ENCODE measurements at regions of chr2 and their contacts with region 1.

Region 1: GRCh38 chr2:80238692-80239469 is 65.7 kb downstream of the LRRTM1 start:
- DNase-seq: no peak
- CTCF ChIP-seq: peak; percentile 30

Region 2: DNA sequence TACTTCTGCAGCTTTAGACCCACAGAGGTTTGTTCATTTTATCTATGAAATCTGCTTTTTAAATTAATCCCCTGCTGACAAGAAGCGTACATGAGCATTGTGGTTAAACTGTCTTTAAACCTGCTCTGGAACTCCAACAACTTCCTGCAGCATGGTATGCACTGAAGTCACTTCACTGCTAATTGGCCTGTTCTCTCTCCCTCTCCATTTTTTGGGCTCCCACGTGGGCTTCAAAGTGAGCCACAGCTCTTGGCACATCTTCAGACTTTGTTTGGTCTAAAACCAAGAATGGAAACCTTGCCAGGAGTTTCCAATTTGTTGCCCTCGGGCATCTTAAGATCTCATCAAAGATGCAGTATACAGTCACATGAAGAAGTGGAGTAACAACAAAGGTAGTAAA is 245.7 kb before region 1 on chr2:
- CTCF ChIA-PET with region 1: no interaction called
- POLR2A ChIA-PET with region 1: no interaction called
- DNase-seq: no peak
- CTCF ChIP-seq: no peak

Region 3: GRCh38 chr2:80169811-80170594 is 68.9 kb before region 1 on chr2:
- CTCF ChIA-PET with region 1: no interaction called
- POLR2A ChIA-PET with region 1: no interaction called
- DNase-seq: no peak
- CTCF ChIP-seq: no peak

Region 4: GRCh38 chr2:80217446-80217845 is 21.4 kb before region 1 on chr2:
- CTCF ChIA-PET with region 1: interaction called, 10 read pairs
- POLR2A ChIA-PET with region 1: no interaction called
- DNase-seq: no peak
- CTCF ChIP-seq: no peak

Region 5: DNA sequence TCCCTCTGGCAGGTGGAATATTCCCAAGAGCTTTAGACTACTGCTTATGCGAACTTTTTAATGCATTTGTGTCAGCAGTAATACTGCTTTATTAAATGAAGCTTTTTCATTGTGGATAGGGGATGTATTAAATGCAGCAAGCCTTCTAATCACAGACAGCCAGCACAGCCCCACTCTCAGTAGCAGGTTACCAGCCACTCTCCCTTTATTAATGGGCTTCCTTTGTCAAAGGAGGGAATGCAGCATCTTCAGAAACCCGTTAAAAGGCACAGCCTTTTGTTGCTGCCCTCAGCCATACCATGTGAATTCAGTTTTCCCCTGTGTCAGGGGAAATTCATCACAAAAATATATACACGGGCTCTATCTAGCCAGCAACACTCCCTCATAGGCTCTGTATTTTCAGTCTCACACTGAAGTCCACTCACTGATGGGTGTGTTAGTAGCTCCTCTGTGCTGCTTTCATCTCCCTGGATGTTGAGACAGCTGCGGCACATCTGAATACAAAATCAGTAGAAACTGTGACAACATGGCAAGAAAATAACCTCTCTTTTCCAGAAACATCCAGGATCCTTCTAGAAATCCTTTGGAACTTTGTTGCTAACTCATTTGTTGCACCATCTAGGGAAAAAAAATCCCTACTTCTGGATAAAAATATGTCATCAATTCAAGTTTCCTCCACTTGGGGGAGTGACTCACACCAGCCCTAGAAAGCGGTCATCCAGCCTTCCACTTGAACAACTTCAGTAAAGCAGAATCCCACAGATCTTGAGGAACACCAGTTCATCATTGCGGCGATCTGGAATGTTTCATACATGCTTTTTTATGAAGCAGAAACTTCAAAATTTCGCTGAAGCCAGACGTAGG is 17.3 kb after region 1 on chr2:
- CTCF ChIA-PET with region 1: interaction called, 11 read pairs
- POLR2A ChIA-PET with region 1: no interaction called
- DNase-seq: no peak
- CTCF ChIP-seq: no peak